ENCODE measurements at regions of chr5 and their contacts with region 1.

Region 1: GRCh38 chr5:35617435-35618303 is at the start of gene SPEF2:
- DNase-seq: peak; percentile 89
- ATAC-seq: peak; percentile 92
- H3K4me3 Mint-ChIP-seq: peak within 1 kb of the TSS; percentile 84
- H3K27ac Mint-ChIP-seq: peak within 1 kb of the TSS; percentile 97
- H3K4me1 Mint-ChIP-seq: peaks cover 25% of the 10 kb centered on the region
- H3K27me3 Mint-ChIP-seq: no peaks in the 10 kb centered on the region
- CTCF ChIP-seq: peak; percentile 84
- total RNA-seq, gene SPEF2: 8.4 to 9.9 TPM

Region 2: GRCh38 chr5:35938568-35939227 is 321.0 kb after region 1 on chr5 and contains the start of gene CAPSL:
- CTCF ChIA-PET with region 1: interaction called, 14 read pairs
- POLR2A ChIA-PET with region 1: no interaction called
- intact Hi-C with region 1: no loop called
- DNase-seq: no peak
- ATAC-seq: no peak
- H3K4me3 Mint-ChIP-seq: no peak within 1 kb of the TSS
- H3K27ac Mint-ChIP-seq: no peak within 1 kb of the TSS
- H3K4me1 Mint-ChIP-seq: no peaks in the 10 kb centered on the region
- H3K27me3 Mint-ChIP-seq: peaks cover 8% of the 10 kb centered on the region
- CTCF ChIP-seq: no peak
- total RNA-seq, gene CAPSL: 0.43 to 0.56 TPM

Measured in activated CD8-positive, alpha-beta T cell treated with anti-CD3 and anti-CD28 coated beads for 36 hours (primary cell).